A673 (cell line): ENCODE measurements at regions of chr20 and their contacts with region 1.

Region 1: DNA sequence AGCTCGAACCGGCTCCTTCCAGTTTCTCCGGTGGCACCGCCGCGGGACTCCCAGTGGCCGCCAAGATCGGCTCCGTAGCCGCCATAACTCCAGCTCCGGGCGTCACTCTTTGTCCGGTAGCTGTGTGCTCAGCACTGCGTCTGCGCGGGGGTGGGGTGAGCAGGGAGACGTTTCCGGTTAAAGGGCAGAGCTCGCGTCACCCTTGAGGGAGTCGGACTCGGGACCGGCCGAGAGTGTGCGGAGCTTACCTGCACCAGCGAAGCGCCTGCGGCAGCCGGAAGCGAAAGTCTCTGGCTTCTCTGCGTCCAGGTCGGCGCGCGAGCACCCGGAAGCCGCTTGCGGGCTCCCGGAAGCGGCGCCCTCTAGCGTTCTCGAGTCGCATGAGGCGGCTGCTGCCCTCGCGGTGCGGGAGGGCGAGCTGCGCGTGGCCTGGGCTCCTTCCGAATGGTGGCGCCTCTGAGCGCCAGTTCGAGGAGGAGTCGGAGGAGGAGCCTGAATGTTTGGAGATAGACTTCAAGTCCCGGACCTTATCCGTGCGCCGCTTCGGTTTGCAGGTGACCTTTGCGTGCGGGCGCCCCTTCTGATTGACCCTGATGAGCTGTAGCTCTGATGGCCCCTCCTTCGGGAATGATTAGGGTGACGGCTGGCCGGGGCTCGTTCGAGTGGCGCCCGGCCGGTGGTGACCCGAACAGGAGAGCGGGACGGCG is at the start of gene SCAND1:
- DNase-seq: peak; percentile 98
- H3K4me3 ChIP-seq: peak within 1 kb of the TSS; percentile 91
- H3K27ac ChIP-seq: peak within 1 kb of the TSS; percentile 97
- H3K4me1 ChIP-seq: peaks cover 9% of the 10 kb centered on the region
- H3K27me3 ChIP-seq: no peaks in the 10 kb centered on the region
- CTCF ChIP-seq: peak; percentile 100
- total RNA-seq, gene SCAND1: 84.5 and 95.2 TPM in 2 replicates

Region 2: DNA sequence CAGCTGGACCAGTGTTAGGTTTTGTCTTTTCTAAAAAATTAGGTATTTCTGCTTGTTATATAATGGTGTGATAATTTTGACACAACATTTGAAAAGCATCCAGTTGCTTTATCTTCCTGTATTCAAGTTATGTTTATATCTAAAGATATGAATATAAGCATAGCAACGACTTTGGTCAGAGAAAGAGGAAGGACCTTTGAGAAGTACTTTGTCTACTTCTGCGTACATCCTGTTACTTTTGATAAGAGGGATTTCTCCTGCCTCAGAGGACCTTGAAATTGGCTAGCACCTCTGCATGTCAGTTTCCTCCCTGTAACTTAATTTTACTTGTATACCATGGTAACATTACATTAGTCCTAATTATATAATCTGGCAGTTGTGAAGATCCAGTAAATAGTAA is 157.8 kb before region 1 on chr20:
- CTCF ChIA-PET with region 1: no interaction called
- POLR2A ChIA-PET with region 1: interaction called, 21 read pairs
- intact Hi-C with region 1: no loop called
- DNase-seq: no peak
- H3K4me3 ChIP-seq: no peak overlapping the region
- H3K27ac ChIP-seq: no peak overlapping the region
- H3K4me1 ChIP-seq: no peaks in the 10 kb centered on the region
- H3K27me3 ChIP-seq: no peaks in the 10 kb centered on the region
- CTCF ChIP-seq: no peak

Region 3: GRCh38 chr20:36082460-36082859 is 128.1 kb after region 1 on chr20:
- CTCF ChIA-PET with region 1: no interaction called
- POLR2A ChIA-PET with region 1: no interaction called
- intact Hi-C with region 1: no loop called
- DNase-seq: no peak
- H3K4me3 ChIP-seq: no peak overlapping the region
- H3K27ac ChIP-seq: no peak overlapping the region
- H3K4me1 ChIP-seq: no peaks in the 10 kb centered on the region
- H3K27me3 ChIP-seq: no peaks in the 10 kb centered on the region
- CTCF ChIP-seq: no peak

Region 4: GRCh38 chr20:36093025-36093803 is 138.9 kb after region 1 on chr20:
- CTCF ChIA-PET with region 1: no interaction called
- POLR2A ChIA-PET with region 1: interaction called, 11 read pairs
- intact Hi-C with region 1: no loop called
- DNase-seq: peak; percentile 45
- H3K4me3 ChIP-seq: peak overlapping the region; percentile 51
- H3K27ac ChIP-seq: no peak overlapping the region
- H3K4me1 ChIP-seq: no peaks in the 10 kb centered on the region
- H3K27me3 ChIP-seq: peaks cover 47% of the 10 kb centered on the region
- CTCF ChIP-seq: no peak